ENCODE measurements at regions of chr14 and their contacts with region 1.

Region 1: GRCh38 chr14:95561001-95561412 is 26.2 kb downstream of the GLRX5 start:
- DNase-seq: peak; percentile 83 to 98
- H3K4me3 ChIP-seq: no peak overlapping the region
- H3K27ac ChIP-seq: no peak overlapping the region
- H3K4me1 ChIP-seq: peaks cover 0 to 5% (median 4%) of the 10 kb centered on the region in 4 experiments; a peak in 6 of 7 replicates
- H3K27me3 ChIP-seq: no peaks in the 10 kb centered on the region; a peak in 2 of 7 replicates
- CTCF ChIP-seq: peak; percentile 99 to 100 (median 99)
- EP300 ChIP-seq: peak in 1 of 2 experiments; percentile 31; a peak in 1 of 3 replicates
- POLR2A ChIP-seq: no peak
- RAD21 ChIP-seq: peak; percentile 100

Region 2: DNA sequence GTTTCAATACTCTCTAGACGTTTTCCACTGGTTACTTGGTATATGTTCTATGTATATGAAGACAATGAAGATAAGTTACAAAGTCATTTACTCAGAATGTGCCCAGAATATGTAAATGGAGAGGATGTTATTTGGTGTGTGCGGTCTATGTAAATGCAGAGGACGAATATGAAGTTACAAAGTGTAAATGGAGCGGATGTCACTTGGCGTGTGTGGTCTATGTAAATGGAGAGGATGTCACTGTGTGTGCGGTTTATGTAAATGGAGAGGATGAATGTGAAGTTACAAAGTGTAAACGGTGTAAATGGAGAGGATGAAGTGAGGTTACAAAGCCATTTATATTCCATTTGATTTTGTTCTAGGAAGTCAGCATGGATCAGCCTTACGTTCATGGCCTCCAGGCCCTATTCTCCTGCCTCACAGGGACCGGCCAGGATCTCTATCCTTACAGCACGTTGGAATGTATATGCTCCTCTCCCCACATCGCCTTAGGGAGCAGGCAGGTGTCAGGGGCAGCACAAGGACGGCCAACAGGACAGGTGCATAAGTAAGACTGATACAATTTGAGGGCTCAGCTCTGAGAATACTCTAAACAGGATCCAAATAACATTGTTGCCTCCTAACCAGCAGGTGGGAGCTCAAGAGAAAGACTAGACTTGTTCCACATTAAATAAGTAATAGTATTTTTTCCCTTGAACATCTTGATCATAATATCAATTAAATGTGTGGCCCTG is 16.2 kb after region 1 on chr14:
- CTCF ChIA-PET with region 1: interaction called, 19 read pairs
- POLR2A ChIA-PET with region 1: no interaction called
- DNase-seq: no peak
- H3K4me3 ChIP-seq: no peak overlapping the region
- H3K27ac ChIP-seq: no peak overlapping the region
- H3K4me1 ChIP-seq: peaks cover 0 to 6% (median 2%) of the 10 kb centered on the region in 4 experiments; a peak in 6 of 7 replicates
- H3K27me3 ChIP-seq: peaks cover 0 to 6% (median 4%) of the 10 kb centered on the region in 4 experiments; a peak in 4 of 7 replicates
- CTCF ChIP-seq: no peak
- EP300 ChIP-seq: no peak
- POLR2A ChIP-seq: no peak
- RAD21 ChIP-seq: no peak

Region 3: DNA sequence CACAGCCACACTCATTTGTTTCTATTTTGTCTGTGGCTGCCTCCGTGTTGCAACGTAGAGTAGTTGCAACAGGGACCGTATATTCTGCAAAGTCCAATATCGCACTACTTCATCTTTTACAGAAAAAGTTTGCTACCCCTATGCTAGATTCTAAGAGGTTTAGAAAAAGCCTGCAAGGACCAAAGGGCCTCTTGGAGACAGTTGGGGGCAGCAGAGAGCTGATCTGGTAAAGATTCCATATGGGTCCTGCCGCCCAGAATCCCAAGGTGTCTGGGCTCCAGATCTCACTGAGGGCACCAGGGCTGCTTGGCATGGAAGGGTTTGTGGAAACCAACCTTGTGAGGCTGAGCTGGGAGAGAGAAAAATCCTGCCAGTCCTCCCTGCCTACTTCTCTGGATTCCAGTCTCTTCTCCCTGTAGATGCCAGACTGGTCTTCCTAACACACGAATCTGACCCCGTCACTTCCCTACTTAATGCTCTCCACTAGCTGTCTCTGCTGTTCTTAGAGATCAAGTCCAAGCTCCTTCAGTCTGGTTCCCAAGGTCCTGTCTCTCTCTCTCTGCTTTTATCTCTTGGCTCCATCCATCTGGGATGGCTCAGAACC is 48.5 kb after region 1 on chr14:
- CTCF ChIA-PET with region 1: interaction called, 58 read pairs
- POLR2A ChIA-PET with region 1: no interaction called
- DNase-seq: peak in 1 of 2 experiments; percentile 80
- H3K4me3 ChIP-seq: no peak overlapping the region
- H3K27ac ChIP-seq: no peak overlapping the region
- H3K4me1 ChIP-seq: no peaks in the 10 kb centered on the region; a peak in 1 of 7 replicates
- H3K27me3 ChIP-seq: peaks cover 0 to 4% (median 0%) of the 10 kb centered on the region in 4 experiments; a peak in 1 of 7 replicates
- CTCF ChIP-seq: peak; percentile 47 to 83 (median 82)
- EP300 ChIP-seq: no peak
- POLR2A ChIP-seq: no peak
- RAD21 ChIP-seq: peak; percentile 87 to 90

Region 4: DNA sequence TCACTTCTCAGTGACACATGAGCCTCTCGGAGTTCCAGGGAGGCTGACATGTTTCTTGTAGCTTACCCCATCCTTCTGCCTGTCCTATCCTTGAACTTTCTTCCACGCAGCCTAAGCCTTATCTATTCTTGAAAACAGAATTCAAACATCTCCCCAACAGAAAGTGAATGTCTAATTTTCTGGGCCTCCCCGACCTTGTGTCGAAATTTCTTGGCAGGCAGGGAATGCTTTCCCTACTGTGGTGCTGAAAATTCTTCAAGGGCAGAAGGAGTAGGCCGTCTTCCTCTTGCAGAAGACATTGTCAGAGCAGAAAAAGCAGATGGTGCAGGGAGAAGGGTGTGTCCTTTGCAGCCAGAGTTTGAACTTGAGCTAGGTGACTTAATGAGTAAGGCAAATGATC is 62.2 kb after region 1 on chr14:
- CTCF ChIA-PET with region 1: no interaction called
- POLR2A ChIA-PET with region 1: no interaction called
- DNase-seq: no peak
- H3K4me3 ChIP-seq: no peak overlapping the region
- H3K27ac ChIP-seq: no peak overlapping the region
- H3K4me1 ChIP-seq: peaks cover 0 to 18% (median 8%) of the 10 kb centered on the region in 4 experiments; a peak in 4 of 7 replicates
- H3K27me3 ChIP-seq: peaks cover 0 to 2% (median 0%) of the 10 kb centered on the region in 4 experiments; a peak in 1 of 7 replicates
- CTCF ChIP-seq: no peak
- EP300 ChIP-seq: no peak
- POLR2A ChIP-seq: no peak
- RAD21 ChIP-seq: no peak

Region 5: GRCh38 chr14:95697764-95698163 is 136.8 kb after region 1 on chr14:
- CTCF ChIA-PET with region 1: interaction called, 13 read pairs
- POLR2A ChIA-PET with region 1: no interaction called
- DNase-seq: no peak
- H3K4me3 ChIP-seq: no peak overlapping the region
- H3K27ac ChIP-seq: no peak overlapping the region
- H3K4me1 ChIP-seq: peaks cover 6 to 18% (median 13%) of the 10 kb centered on the region in 4 experiments
- H3K27me3 ChIP-seq: peaks cover 22 to 55% (median 49%) of the 10 kb centered on the region in 4 experiments
- CTCF ChIP-seq: no peak
- EP300 ChIP-seq: no peak
- POLR2A ChIP-seq: no peak
- RAD21 ChIP-seq: no peak

Region 6: GRCh38 chr14:95855606-95856005 is 294.6 kb after region 1 on chr14:
- CTCF ChIA-PET with region 1: interaction called, 11 read pairs
- POLR2A ChIA-PET with region 1: no interaction called
- DNase-seq: no peak
- H3K4me3 ChIP-seq: no peak overlapping the region
- H3K27ac ChIP-seq: no peak overlapping the region
- H3K4me1 ChIP-seq: peaks cover 0 to 3% (median 0%) of the 10 kb centered on the region in 4 experiments; a peak in 1 of 7 replicates
- H3K27me3 ChIP-seq: no peaks in the 10 kb centered on the region; a peak in 1 of 7 replicates
- CTCF ChIP-seq: no peak
- EP300 ChIP-seq: no peak
- POLR2A ChIP-seq: no peak
- RAD21 ChIP-seq: no peak

Region 7: DNA sequence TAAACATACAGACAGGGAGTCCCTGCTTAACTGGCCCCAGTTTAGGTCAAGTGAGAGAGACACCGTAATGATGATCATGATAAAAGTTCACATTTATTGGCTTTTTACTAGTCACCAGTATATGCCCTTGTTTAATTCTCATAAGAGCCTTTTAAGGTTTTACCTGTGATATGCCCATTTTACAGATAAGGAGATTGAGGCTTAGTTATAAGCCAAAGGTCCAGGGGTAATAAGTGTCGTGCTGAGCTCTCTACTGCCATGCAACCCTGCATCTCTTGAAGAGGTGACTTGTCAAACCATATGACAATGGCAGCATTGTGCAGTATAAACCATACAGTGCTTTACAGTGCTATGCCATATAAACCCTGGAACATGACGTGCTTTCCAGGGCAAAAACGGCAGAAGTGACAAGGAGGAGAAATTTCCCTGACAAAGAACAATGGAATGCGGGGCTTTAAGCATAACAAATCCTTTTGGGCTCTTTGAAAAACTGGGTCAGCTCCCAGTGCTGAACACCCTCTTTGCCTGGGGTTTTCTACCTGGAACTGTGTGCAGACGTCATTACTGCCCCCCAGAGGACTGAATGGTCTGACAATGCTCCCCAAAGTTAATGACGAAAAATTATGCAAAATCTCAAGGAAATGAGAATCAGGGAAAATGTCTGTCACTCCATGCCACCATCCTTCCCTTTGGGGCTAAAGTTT is 418.5 kb after region 1 on chr14:
- CTCF ChIA-PET with region 1: interaction called, 18 read pairs
- POLR2A ChIA-PET with region 1: no interaction called
- DNase-seq: peak; percentile 57 to 58
- H3K4me3 ChIP-seq: peak overlapping the region in 2 of 4 experiments; percentile 14 to 36; a peak in 2 of 8 replicates
- H3K27ac ChIP-seq: peak overlapping the region; percentile 88
- H3K4me1 ChIP-seq: peaks cover 15 to 28% (median 25%) of the 10 kb centered on the region in 4 experiments
- H3K27me3 ChIP-seq: no peaks in the 10 kb centered on the region
- CTCF ChIP-seq: peak; percentile 25 to 58 (median 54)
- EP300 ChIP-seq: peak in 1 of 2 experiments; percentile 80; a peak in 1 of 3 replicates
- POLR2A ChIP-seq: no peak
- RAD21 ChIP-seq: peak; percentile 64 to 75

Region 8: DNA sequence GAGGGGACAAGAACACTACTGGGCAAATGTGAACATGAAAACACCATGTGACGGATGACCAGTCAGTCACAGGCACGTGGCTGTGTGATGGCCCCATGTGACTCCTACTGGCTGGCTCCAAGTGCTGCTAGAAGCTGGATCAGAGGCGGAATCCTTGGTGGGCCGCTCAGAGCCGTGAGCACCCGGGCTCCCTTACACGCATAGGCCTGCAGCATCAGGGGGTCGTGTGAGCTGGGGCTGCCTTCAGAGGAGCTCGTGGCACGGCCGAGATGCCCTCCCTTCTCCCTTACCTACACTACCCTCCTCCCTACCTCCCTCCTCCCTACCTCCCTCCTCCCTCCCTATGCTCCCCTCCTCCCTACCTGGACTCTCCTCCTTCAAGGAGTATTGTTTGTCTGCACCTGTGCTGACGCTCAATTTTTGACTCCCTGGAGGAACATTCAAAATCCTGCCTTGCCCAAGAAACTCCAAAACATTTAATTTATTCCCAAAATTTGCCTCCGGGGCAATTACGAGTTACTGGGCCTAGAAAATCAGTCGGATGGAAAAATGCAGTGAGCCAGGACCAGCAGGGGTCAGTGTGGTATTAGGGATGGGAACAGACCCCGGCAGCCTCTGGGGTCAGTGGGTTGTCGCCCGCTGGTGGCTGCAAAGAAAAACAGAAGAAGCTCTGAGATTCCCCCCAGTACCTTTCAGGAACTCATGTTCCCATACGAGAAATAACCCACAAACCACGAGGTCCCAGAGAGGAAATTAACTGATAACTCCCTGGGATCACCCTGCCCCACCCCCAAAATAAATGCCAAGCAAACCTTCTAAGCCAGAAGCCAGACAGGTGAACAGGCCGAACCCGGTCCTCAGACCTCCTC is 539.4 kb after region 1 on chr14:
- CTCF ChIA-PET with region 1: interaction called, 34 read pairs
- POLR2A ChIA-PET with region 1: no interaction called
- DNase-seq: peak; percentile 66 to 96
- H3K4me3 ChIP-seq: no peak overlapping the region
- H3K27ac ChIP-seq: no peak overlapping the region
- H3K4me1 ChIP-seq: peaks cover 1 to 9% (median 5%) of the 10 kb centered on the region in 4 experiments
- H3K27me3 ChIP-seq: no peaks in the 10 kb centered on the region
- CTCF ChIP-seq: peak; percentile 86 to 100 (median 93)
- EP300 ChIP-seq: no peak; a peak in 1 of 3 replicates
- POLR2A ChIP-seq: no peak
- RAD21 ChIP-seq: peak; percentile 99 to 100